Heart left ventricle (tissue), 16 donors: ENCODE measurements at regions of chr5 and their contacts with region 1.

Region 1: GRCh38 chr5:132283423-132284043 is 10.7 kb upstream of the SLC22A4 start:
- DNase-seq: no peak
- ATAC-seq: peak in 3 of 4 donors; percentile 69 to 79 (median 70)
- H3K4me3 ChIP-seq: no peak overlapping the region
- H3K27ac ChIP-seq: no peak overlapping the region
- H3K4me1 ChIP-seq: peaks cover 0 to 3% (median 0%) of the 10 kb centered on the region in 12 donors
- H3K27me3 ChIP-seq: no peaks in the 10 kb centered on the region
- CTCF ChIP-seq: peak; percentile 40 to 72 (median 57)
- POLR2A ChIP-seq: no peak

Region 2: GRCh38 chr5:132180134-132180745 is 103.3 kb before region 1 on chr5:
- intact Hi-C with region 1: loop called in 2 of 10 experiments (anchors 10 kb)
- DNase-seq: no peak
- ATAC-seq: peak in 2 of 4 donors; percentile 58 to 64
- H3K4me3 ChIP-seq: no peak overlapping the region
- H3K27ac ChIP-seq: no peak overlapping the region
- H3K4me1 ChIP-seq: peaks cover 0 to 18% (median 3%) of the 10 kb centered on the region in 12 donors
- H3K27me3 ChIP-seq: no peaks in the 10 kb centered on the region
- CTCF ChIP-seq: peak; percentile 53 to 81 (median 71)
- POLR2A ChIP-seq: no peak

Region 3: DNA sequence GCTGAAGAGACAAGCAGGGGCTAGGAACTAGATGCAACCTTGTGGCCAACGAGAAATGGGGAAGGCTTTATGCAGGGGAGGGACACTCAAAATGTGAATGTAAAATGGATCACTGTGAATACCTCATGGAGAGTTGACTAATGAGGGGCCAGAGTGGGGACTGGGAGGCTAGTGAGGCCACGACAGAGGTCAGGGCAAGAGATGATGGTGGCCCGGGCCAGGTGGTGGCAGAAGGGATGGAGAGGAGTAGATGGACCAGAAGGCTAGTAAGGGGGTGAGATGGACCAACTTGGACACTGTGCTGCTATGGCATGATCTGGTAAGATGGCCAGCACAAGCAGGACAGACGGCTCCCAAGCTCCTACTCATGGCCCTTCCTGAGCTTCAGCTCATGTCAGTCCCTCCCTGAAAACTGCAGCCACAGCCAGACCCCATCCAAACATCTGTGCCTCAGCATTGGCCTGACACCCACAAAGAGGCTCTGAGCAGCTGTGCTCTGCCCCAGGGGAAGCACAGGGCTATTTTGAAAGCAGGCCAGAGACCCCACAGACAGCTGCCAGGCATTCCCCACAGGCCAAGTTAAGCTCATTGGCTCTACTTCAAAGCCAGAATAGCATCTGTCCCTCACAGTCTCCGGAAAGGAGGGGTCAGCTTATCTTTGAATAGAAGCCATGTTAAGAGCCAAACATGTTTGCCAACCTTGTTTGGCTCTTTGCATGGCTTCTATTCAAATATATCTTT is 78.0 kb before region 1 on chr5:
- intact Hi-C with region 1: no loop called
- DNase-seq: peak in 4 of 5 donors; percentile 46 to 72 (median 52)
- ATAC-seq: peak; percentile 76 to 84 (median 82)
- H3K4me3 ChIP-seq: no peak overlapping the region
- H3K27ac ChIP-seq: peak overlapping the region in 8 of 12 donors; percentile 29 to 73 (median 58)
- H3K4me1 ChIP-seq: peaks cover 0 to 64% (median 29%) of the 10 kb centered on the region in 12 donors
- H3K27me3 ChIP-seq: no peaks in the 10 kb centered on the region
- CTCF ChIP-seq: no peak
- POLR2A ChIP-seq: no peak

Region 4: GRCh38 chr5:132238169-132238744 is 45.3 kb before region 1 on chr5:
- intact Hi-C with region 1: loop called in 1 of 10 experiments (anchors 5 kb)
- DNase-seq: peak; percentile 60 to 73 (median 68)
- ATAC-seq: peak; percentile 57 to 84 (median 76)
- H3K4me3 ChIP-seq: no peak overlapping the region
- H3K27ac ChIP-seq: no peak overlapping the region
- H3K4me1 ChIP-seq: no peaks in the 10 kb centered on the region
- H3K27me3 ChIP-seq: no peaks in the 10 kb centered on the region
- CTCF ChIP-seq: peak; percentile 73 to 90 (median 80)
- POLR2A ChIP-seq: no peak